Caco-2 (cell line): ENCODE measurements at regions of chr19 and their contacts with region 1.

Region 1: DNA sequence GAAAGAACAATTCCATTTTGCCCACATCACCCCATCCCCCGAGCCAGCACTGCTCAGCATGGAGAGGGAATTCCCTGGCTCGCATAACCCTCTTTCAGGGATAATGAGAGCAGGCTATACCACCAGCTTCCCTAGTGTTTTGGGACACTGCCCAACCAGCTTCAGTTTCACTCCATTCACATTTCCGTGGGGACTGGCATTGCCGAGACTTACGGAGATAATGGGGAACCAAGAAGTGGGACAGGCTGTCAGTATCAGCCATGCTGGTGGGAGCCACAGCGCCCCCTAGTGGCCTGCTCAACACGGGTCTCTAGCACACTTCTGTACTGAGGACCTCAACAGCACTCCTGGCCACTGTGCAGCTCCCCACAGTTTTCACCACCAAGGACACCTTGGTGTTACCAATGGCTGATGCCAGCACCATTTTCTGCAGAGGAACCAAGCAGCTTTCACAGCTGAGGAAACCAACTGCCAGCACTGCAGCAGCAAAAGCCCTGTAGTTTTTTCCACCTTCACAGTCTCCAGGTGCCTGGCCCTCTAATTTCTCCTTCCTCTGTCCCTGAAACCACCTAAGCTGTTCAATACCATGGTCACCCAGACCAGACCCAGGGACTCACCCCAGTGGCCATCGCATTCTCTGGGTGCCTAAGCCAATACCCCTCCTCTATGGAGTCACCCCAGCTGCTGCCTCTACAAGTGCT is 23.7 kb downstream of the SLC6A16 start:
- DNase-seq: peak; percentile 72 to 78
- H3K4me3 ChIP-seq: no peak overlapping the region
- H3K4me3 Mint-ChIP-seq: no peak overlapping the region
- H3K27ac Mint-ChIP-seq: no peak overlapping the region
- H3K4me1 ChIP-seq: no peaks in the 10 kb centered on the region
- H3K4me1 Mint-ChIP-seq: no peaks in the 10 kb centered on the region
- H3K27me3 ChIP-seq: no peaks in the 10 kb centered on the region
- H3K27me3 Mint-ChIP-seq: peaks cover 2% of the 10 kb centered on the region
- CTCF ChIP-seq: peak; percentile 87

Region 2: GRCh38 chr19:49272184-49272583 is 29.1 kb before region 1 on chr19:
- CTCF ChIA-PET with region 1: interaction called, 3 read pairs
- POLR2A ChIA-PET with region 1: no interaction called
- intact Hi-C with region 1: loop called (anchors 2 kb)
- DNase-seq: no peak
- H3K4me3 ChIP-seq: no peak overlapping the region
- H3K4me3 Mint-ChIP-seq: no peak overlapping the region
- H3K27ac Mint-ChIP-seq: no peak overlapping the region
- H3K4me1 ChIP-seq: peaks cover 5% of the 10 kb centered on the region; the same call in 1 of the 2 replicates
- H3K4me1 Mint-ChIP-seq: peaks cover 6% of the 10 kb centered on the region
- H3K27me3 ChIP-seq: no peaks in the 10 kb centered on the region
- H3K27me3 Mint-ChIP-seq: no peaks in the 10 kb centered on the region
- CTCF ChIP-seq: no peak

Region 3: DNA sequence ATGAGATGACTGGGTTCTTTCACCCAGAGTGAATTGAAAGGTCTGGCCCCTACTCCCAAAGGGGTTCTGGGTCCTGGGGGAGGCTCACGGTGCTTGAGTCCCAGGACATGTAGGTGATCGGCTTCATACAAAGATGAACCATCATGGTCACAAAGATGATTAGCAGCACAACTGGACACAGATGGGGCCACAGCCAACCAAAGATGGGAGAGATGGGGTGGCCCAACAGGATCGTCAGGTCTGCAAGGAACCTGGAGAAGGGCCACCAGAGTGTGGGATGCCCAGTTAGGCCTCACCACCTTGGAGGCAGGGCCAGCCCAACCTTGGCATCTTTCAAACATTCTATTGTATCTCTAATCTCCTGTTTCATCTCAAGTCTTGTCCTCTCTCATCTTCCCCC is 10.8 kb before region 1 on chr19:
- CTCF ChIA-PET with region 1: no interaction called
- POLR2A ChIA-PET with region 1: no interaction called
- intact Hi-C with region 1: no loop called
- DNase-seq: no peak
- H3K4me3 ChIP-seq: no peak overlapping the region
- H3K4me3 Mint-ChIP-seq: no peak overlapping the region
- H3K27ac Mint-ChIP-seq: no peak overlapping the region
- H3K4me1 ChIP-seq: 0 out of 2 replicates have a peak, but pooled peaks cover 4% of the 10 kb centered on the region
- H3K4me1 Mint-ChIP-seq: no peaks in the 10 kb centered on the region
- H3K27me3 ChIP-seq: no peaks in the 10 kb centered on the region
- H3K27me3 Mint-ChIP-seq: no peaks in the 10 kb centered on the region
- CTCF ChIP-seq: no peak

Region 4: DNA sequence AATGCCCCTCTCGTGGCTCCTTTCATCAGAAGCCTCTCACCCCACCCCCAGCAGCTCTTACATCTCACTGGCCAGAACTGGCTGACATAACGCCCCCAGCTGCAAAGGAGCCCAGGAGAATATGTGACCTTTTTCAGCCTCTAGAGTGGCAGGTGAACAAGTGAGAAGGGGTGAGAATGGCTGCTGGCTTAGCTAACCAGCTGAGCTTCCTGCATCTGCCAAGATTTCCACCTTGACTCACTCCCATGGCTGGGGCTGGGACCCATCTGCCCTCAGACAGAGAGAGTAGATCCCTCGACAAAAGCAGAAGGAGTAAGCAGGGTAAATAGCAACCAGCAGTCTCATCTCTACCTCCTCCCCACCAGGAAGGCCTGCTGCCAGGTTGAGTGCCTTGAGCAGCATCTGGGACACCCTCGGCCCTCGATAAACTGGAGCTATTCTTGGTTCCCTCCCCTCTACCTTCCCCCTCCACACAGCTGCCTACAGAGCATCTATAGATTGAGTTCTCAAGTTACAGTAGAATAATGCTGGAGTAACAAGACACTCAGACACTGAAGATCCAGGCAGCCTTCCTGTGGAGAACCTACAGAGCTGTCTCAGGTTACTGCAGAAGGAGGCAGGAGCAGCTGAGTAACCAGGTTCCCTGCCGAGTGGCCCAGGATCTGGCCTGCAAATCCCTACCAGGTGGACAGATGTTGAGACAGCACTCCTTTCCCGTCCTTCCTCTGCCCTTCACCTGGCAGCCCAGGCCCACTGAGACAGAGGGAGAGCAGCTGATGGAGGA is 102.3 kb after region 1 on chr19:
- CTCF ChIA-PET with region 1: no interaction called
- POLR2A ChIA-PET with region 1: no interaction called
- intact Hi-C with region 1: no loop called
- DNase-seq: no peak
- H3K4me3 ChIP-seq: no peak overlapping the region
- H3K4me3 Mint-ChIP-seq: no peak overlapping the region
- H3K27ac Mint-ChIP-seq: no peak overlapping the region
- H3K4me1 ChIP-seq: peaks cover 13% of the 10 kb centered on the region
- H3K4me1 Mint-ChIP-seq: peaks cover 4% of the 10 kb centered on the region
- H3K27me3 ChIP-seq: no peaks in the 10 kb centered on the region
- H3K27me3 Mint-ChIP-seq: peaks cover 6% of the 10 kb centered on the region
- CTCF ChIP-seq: no peak